Sciatic nerve (tissue), 2 donors: ENCODE measurements at regions of chr9 and their contacts with region 1.

Region 1: GRCh38 chr9:70428781-70429180 is 14.3 kb upstream of the KLF9 start:
- DNase-seq: no peak
- ATAC-seq: no peak

Region 2: GRCh38 chr9:70303268-70303667 is 125.5 kb before region 1 on chr9:
- intact Hi-C with region 1: no loop called
- DNase-seq: no peak
- ATAC-seq: no peak

Region 3: GRCh38 chr9:70477146-70477745 is 48.5 kb after region 1 on chr9:
- intact Hi-C with region 1: loop called (anchors 1 kb)
- DNase-seq: no peak
- ATAC-seq: no peak

Region 4: DNA sequence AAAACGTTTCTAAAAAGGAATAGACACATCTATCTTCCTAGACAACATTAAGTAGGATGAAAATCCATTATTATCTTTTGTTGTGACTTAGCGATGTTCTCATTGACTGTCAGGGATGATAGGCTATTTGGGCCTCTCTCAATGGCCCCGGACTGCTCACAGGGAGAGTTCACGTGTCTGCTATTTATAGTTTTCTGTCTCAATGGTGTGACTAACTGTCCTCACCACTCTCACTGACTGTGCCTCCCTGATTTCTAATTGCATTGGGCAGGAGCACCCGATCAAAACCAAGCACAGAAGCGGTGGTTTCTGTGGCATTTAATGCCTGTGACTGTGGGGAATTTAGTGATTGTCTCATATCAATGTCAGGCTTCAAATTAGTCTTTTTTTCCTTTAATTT is 272.4 kb after region 1 on chr9:
- intact Hi-C with region 1: no loop called
- DNase-seq: no peak
- ATAC-seq: no peak